CD8-positive, alpha-beta T cell (primary cell): ENCODE measurements at regions of chr22 and their contacts with region 1.

Region 1: GRCh38 chr22:41832553-41833368 is at the start of gene SREBF2:
- DNase-seq: peak; percentile 97 to 100 (median 99)
- ATAC-seq: peak; percentile 94
- H3K4me3 ChIP-seq: peak within 1 kb of the TSS; percentile 76 to 84
- H3K4me3 Mint-ChIP-seq: peak within 1 kb of the TSS; percentile 97
- H3K27ac ChIP-seq: peak within 1 kb of the TSS; percentile 85 to 97
- H3K27ac Mint-ChIP-seq: peak within 1 kb of the TSS; percentile 100
- H3K4me1 ChIP-seq: peaks cover 15% of the 10 kb centered on the region
- H3K4me1 Mint-ChIP-seq: peaks cover 31% of the 10 kb centered on the region
- H3K27me3 ChIP-seq: no peaks in the 10 kb centered on the region
- H3K27me3 Mint-ChIP-seq: no peaks in the 10 kb centered on the region
- CTCF ChIP-seq: no peak
- total RNA-seq, gene SREBF2: 109 to 122 TPM

Region 2: GRCh38 chr22:41140365-41140957 is 692.3 kb before region 1 on chr22:
- CTCF ChIA-PET with region 1: no interaction called
- POLR2A ChIA-PET with region 1: no interaction called
- intact Hi-C with region 1: no loop called
- DNase-seq: no peak
- ATAC-seq: no peak
- H3K4me3 ChIP-seq: no peak overlapping the region
- H3K4me3 Mint-ChIP-seq: no peak overlapping the region
- H3K27ac ChIP-seq: no peak overlapping the region
- H3K27ac Mint-ChIP-seq: no peak overlapping the region
- H3K4me1 ChIP-seq: no peaks in the 10 kb centered on the region
- H3K4me1 Mint-ChIP-seq: no peaks in the 10 kb centered on the region
- H3K27me3 ChIP-seq: no peaks in the 10 kb centered on the region
- H3K27me3 Mint-ChIP-seq: no peaks in the 10 kb centered on the region
- CTCF ChIP-seq: no peak

Region 3: GRCh38 chr22:41621099-41621910 is 211.5 kb before region 1 on chr22 and contains the start of gene XRCC6:
- CTCF ChIA-PET with region 1: interaction called, 3 read pairs
- POLR2A ChIA-PET with region 1: no interaction called
- intact Hi-C with region 1: loop called in 1 of 2 experiments (anchors 1 kb)
- DNase-seq: peak; percentile 99 to 100 (median 100)
- ATAC-seq: peak; percentile 93
- H3K4me3 ChIP-seq: peak within 1 kb of the TSS; percentile 84 to 100
- H3K4me3 Mint-ChIP-seq: peak within 1 kb of the TSS; percentile 100
- H3K27ac ChIP-seq: peak within 1 kb of the TSS; percentile 95 to 100
- H3K27ac Mint-ChIP-seq: peak within 1 kb of the TSS; percentile 100
- H3K4me1 ChIP-seq: peaks cover 25% of the 10 kb centered on the region
- H3K4me1 Mint-ChIP-seq: peaks cover 52% of the 10 kb centered on the region
- H3K27me3 ChIP-seq: no peaks in the 10 kb centered on the region
- H3K27me3 Mint-ChIP-seq: no peaks in the 10 kb centered on the region
- CTCF ChIP-seq: no peak
- total RNA-seq, gene XRCC6: 202 to 205 TPM

Region 4: GRCh38 chr22:41800348-41801146 is 32.2 kb before region 1 on chr22 and contains the start of gene CCDC134:
- CTCF ChIA-PET with region 1: no interaction called
- POLR2A ChIA-PET with region 1: interaction called, 49 read pairs
- intact Hi-C with region 1: loop called (anchors 1 kb)
- DNase-seq: peak; percentile 82 to 95 (median 92)
- ATAC-seq: peak; percentile 96
- H3K4me3 ChIP-seq: peak within 1 kb of the TSS; percentile 97 to 99
- H3K4me3 Mint-ChIP-seq: peak within 1 kb of the TSS; percentile 93
- H3K27ac ChIP-seq: peak within 1 kb of the TSS; percentile 90 to 92
- H3K27ac Mint-ChIP-seq: peak within 1 kb of the TSS; percentile 98
- H3K4me1 ChIP-seq: peaks cover 22% of the 10 kb centered on the region
- H3K4me1 Mint-ChIP-seq: peaks cover 38% of the 10 kb centered on the region
- H3K27me3 ChIP-seq: no peaks in the 10 kb centered on the region
- H3K27me3 Mint-ChIP-seq: no peaks in the 10 kb centered on the region
- CTCF ChIP-seq: no peak
- total RNA-seq, gene CCDC134: 19.1 to 22.5 TPM

Region 5: DNA sequence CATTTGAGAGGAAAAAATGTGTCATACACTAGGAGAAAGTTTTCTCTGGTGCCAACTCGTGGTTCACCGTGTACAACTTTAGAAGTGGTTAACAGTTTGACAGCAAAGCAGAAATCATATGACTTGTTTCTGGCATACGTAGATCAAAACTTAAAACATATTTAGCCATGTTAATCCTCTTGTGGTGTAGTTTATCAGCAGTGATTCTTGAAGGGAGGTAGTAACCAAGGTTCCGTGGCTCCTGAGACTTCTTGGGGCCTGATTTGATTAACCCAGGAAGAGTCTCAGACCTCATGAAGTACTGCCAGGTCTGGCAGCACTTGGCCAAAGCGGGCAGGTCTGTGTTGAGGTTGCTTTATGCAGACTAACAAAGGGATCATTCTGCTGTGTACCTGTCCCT is 40.6 kb after region 1 on chr22:
- CTCF ChIA-PET with region 1: no interaction called
- POLR2A ChIA-PET with region 1: interaction called, 4 read pairs
- intact Hi-C with region 1: loop called in 1 of 2 experiments (anchors 5 kb)
- DNase-seq: peak in 4 of 9 experiments; percentile 33 to 84 (median 67)
- ATAC-seq: peak; percentile 88
- H3K4me3 ChIP-seq: no peak overlapping the region
- H3K4me3 Mint-ChIP-seq: no peak overlapping the region
- H3K27ac ChIP-seq: peak overlapping the region; percentile 38 to 62
- H3K27ac Mint-ChIP-seq: peak overlapping the region; percentile 94
- H3K4me1 ChIP-seq: peaks cover 19% of the 10 kb centered on the region
- H3K4me1 Mint-ChIP-seq: peaks cover 28% of the 10 kb centered on the region
- H3K27me3 ChIP-seq: no peaks in the 10 kb centered on the region
- H3K27me3 Mint-ChIP-seq: no peaks in the 10 kb centered on the region
- CTCF ChIP-seq: no peak

Region 6: GRCh38 chr22:42079319-42080251 is 246.8 kb after region 1 on chr22 and contains the start of gene SMDT1:
- CTCF ChIA-PET with region 1: no interaction called
- POLR2A ChIA-PET with region 1: no interaction called
- intact Hi-C with region 1: loop called in 1 of 2 experiments (anchors 10 kb)
- DNase-seq: peak; percentile 95 to 99 (median 98)
- ATAC-seq: peak; percentile 92
- H3K4me3 ChIP-seq: peak within 1 kb of the TSS; percentile 79 to 80
- H3K4me3 Mint-ChIP-seq: peak within 1 kb of the TSS; percentile 93
- H3K27ac ChIP-seq: peak within 1 kb of the TSS; percentile 89 to 97
- H3K27ac Mint-ChIP-seq: peak within 1 kb of the TSS; percentile 98
- H3K4me1 ChIP-seq: peaks cover 21% of the 10 kb centered on the region
- H3K4me1 Mint-ChIP-seq: peaks cover 36% of the 10 kb centered on the region
- H3K27me3 ChIP-seq: no peaks in the 10 kb centered on the region
- H3K27me3 Mint-ChIP-seq: no peaks in the 10 kb centered on the region
- CTCF ChIP-seq: no peak
- total RNA-seq, gene SMDT1: 30.4 to 34.5 TPM